ENCODE measurements at regions of chr17 and their contacts with region 1.

Region 1: GRCh38 chr17:30970831-30971567 is at the start of gene RNF135:
- DNase-seq: peak; percentile 95
- ATAC-seq: peak; percentile 94 to 95
- H3K4me3 ChIP-seq: peak within 1 kb of the TSS; percentile 60
- H3K27ac ChIP-seq: peak within 1 kb of the TSS; percentile 84 to 91
- H3K4me1 ChIP-seq: peaks cover 10% of the 10 kb centered on the region
- CTCF ChIP-seq: no peak
- EP300 ChIP-seq: no peak
- POLR2A ChIP-seq: peak; percentile 99
- RAD21 ChIP-seq: peak; percentile 11 to 16; a peak in 1 of 5 replicates
- polyA plus RNA-seq, gene RNF135: 35.0 and 43.1 TPM in 2 replicates

Region 2: GRCh38 chr17:30906101-30906911 is 64.7 kb before region 1 on chr17 and contains the start of gene TEFM:
- CTCF ChIA-PET with region 1: interaction called, 5 read pairs
- POLR2A ChIA-PET with region 1: interaction called, 13 read pairs
- DNase-seq: peak; percentile 96
- ATAC-seq: peak; percentile 97 to 98
- H3K4me3 ChIP-seq: peak within 1 kb of the TSS; percentile 76
- H3K27ac ChIP-seq: peak within 1 kb of the TSS; percentile 82 to 91
- H3K4me1 ChIP-seq: peaks cover 11% of the 10 kb centered on the region; the same call in 2 of the 3 replicates
- CTCF ChIP-seq: no peak
- EP300 ChIP-seq: no peak
- POLR2A ChIP-seq: peak; percentile 94
- RAD21 ChIP-seq: peak; percentile 17 to 51; a peak in 3 of 5 replicates
- polyA plus RNA-seq, gene TEFM: 25.3 and 27.5 TPM in 2 replicates

Region 3: DNA sequence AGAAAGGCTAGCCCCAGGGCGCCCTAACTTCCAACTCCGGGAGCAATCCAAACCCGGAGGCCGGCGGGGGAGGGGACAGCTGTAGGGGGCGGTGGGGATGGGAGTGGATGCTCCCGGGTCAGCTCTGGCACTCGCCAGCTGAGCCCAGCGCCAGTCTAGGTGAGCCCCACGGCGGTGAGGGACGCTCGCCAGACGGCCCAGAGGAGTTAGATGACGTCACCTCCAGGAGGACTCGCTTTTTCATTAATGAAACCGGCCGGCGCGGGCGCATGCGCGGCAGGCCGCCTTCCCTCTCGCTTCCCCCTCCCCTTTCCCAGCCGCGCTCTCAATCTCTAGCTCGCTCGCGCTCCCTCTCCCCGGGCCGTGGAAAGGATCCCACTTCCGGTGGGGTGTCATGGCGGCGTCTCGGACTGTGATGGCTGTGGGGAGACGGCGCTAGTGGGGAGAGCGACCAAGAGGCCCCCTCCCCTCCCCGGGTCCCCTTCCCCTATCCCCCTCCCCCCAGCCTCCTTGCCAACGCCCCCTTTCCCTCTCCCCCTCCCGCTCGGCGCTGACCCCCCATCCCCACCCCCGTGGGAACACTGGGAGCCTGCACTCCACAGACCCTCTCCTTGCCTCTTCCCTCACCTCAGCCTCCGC is 123.7 kb after region 1 on chr17 and contains the start of gene NF1:
- CTCF ChIA-PET with region 1: no interaction called
- POLR2A ChIA-PET with region 1: interaction called, 15 read pairs
- DNase-seq: peak; percentile 96 to 99
- ATAC-seq: peak; percentile 87 to 94
- H3K4me3 ChIP-seq: peak within 1 kb of the TSS; percentile 85
- H3K27ac ChIP-seq: peak within 1 kb of the TSS; percentile 96 to 97
- H3K4me1 ChIP-seq: peaks cover 22% of the 10 kb centered on the region; the same call in 2 of the 3 replicates
- CTCF ChIP-seq: no peak
- EP300 ChIP-seq: no peak
- POLR2A ChIP-seq: peak; percentile 84
- RAD21 ChIP-seq: no peak; a peak in 2 of 5 replicates
- polyA plus RNA-seq, gene NF1: 73.2 and 82.5 TPM in 2 replicates